ENCODE measurements at regions of chr12 and their contacts with region 1.

Region 1: DNA sequence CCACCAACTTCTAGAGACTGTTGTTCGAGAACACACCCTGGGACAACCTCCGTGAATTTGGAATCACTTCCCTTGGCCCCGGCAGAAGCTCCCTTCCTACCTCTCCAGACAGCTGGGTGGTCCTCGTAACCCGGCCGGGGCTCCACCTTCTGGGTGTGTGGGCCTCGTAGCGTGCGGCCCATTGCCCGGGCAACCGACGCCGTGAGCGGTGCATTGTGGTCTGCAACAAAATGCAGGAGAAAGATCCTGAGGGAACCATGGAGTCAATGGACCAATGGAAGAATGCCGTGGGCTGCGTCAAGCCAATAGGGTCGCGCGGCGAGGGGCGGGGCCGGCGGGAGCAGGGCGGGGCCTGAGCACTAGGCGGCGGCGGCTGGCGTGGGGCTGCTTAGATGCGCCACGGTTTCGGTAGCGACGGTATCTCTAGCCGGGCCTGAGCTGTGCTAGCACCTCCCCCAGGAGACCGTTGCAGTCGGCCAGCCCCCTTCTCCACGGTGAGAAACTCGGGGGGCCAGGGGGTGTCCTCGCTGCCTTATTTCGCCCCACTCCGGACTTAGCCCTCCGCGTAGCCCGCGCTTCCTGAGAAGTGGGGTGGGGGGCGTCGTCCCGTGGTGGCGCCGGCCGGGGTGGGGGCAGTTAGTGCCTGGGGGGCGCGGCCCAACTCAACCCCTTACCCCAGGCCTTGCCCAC is at the start of gene DYNLL1:
- H3K4me3 ChIP-seq: peak within 1 kb of the TSS; percentile 83
- H3K27ac ChIP-seq: peak within 1 kb of the TSS; percentile 66; the same call in 1 of the 2 replicates
- H3K4me1 ChIP-seq: peaks cover 3% of the 10 kb centered on the region; the same call in 1 of the 2 replicates
- CTCF ChIP-seq: no peak

Region 2: DNA sequence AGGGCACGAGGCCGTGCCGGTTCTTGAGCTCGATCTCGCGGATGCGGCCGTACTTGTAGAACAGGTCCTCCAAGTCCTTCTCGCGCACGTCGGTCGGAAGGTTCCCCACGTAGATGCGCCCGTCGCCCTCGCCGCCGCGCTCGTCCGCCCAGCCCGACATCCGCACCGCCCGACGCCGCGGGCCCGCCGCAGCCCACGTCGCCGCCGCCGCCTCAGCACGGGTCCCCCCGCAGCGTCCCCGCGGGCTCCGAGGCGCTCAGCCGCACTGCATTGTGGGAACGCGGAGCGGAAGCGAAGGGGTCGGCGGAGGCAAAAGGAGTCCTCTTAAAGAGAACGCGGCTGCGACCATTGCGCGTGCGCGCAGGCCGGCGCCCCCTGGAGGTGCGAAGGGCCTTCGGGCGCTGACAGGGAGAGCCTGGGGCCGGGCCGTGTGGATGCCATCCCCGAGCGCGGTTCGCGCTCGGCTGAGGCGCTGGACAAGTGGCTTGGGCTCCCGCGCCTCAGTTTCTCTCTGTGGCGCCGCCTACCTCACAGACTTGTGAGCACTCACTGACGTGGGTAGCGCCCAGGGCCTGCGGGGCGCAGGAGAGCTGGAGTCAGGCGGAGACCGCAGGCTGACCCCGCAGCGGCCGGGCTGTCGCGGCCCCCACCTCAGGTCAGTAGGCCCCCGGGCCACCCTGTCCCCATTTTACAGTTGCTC is 26.3 kb before region 1 on chr12 and contains the start of gene SRSF9:
- CTCF ChIA-PET with region 1: interaction called, 10 read pairs
- POLR2A ChIA-PET with region 1: interaction called, 38 read pairs
- H3K4me3 ChIP-seq: peak within 1 kb of the TSS; percentile 96
- H3K27ac ChIP-seq: peak within 1 kb of the TSS; percentile 99
- H3K4me1 ChIP-seq: peaks cover 14% of the 10 kb centered on the region; the same call in 1 of the 2 replicates
- CTCF ChIP-seq: peak; percentile 99

Region 3: GRCh38 chr12:120483621-120484020 is 12.2 kb before region 1 on chr12:
- CTCF ChIA-PET with region 1: no interaction called
- POLR2A ChIA-PET with region 1: interaction called, 10 read pairs
- H3K4me3 ChIP-seq: no peak overlapping the region
- H3K27ac ChIP-seq: no peak overlapping the region
- H3K4me1 ChIP-seq: no peaks in the 10 kb centered on the region
- CTCF ChIP-seq: no peak

Region 4: GRCh38 chr12:120528861-120529525 is 33.1 kb after region 1 on chr12 and contains the start of gene COQ5:
- CTCF ChIA-PET with region 1: interaction called, 5 read pairs
- POLR2A ChIA-PET with region 1: interaction called, 26 read pairs
- H3K4me3 ChIP-seq: peak within 1 kb of the TSS; percentile 99
- H3K27ac ChIP-seq: peak within 1 kb of the TSS; percentile 69
- H3K4me1 ChIP-seq: no peaks in the 10 kb centered on the region
- CTCF ChIP-seq: peak; percentile 7; the same call in 1 of the 2 replicates

Region 5: GRCh38 chr12:120534203-120534702 is 38.4 kb after region 1 on chr12 and contains the start of gene RNF10:
- CTCF ChIA-PET with region 1: no interaction called
- POLR2A ChIA-PET with region 1: interaction called, 26 read pairs
- H3K4me3 ChIP-seq: peak within 1 kb of the TSS; percentile 86
- H3K27ac ChIP-seq: peak within 1 kb of the TSS; percentile 81
- H3K4me1 ChIP-seq: peaks cover 18% of the 10 kb centered on the region
- CTCF ChIP-seq: no peak

Region 6: GRCh38 chr12:120580787-120581723 is 85.2 kb after region 1 on chr12 and contains the start of gene POP5:
- CTCF ChIA-PET with region 1: interaction called, 4 read pairs
- POLR2A ChIA-PET with region 1: interaction called, 21 read pairs
- H3K4me3 ChIP-seq: peak within 1 kb of the TSS; percentile 83
- H3K27ac ChIP-seq: peak within 1 kb of the TSS; percentile 60; the same call in 1 of the 2 replicates
- H3K4me1 ChIP-seq: no peaks in the 10 kb centered on the region
- CTCF ChIP-seq: no peak